ENCODE measurements at regions of chr12 and their contacts with region 1.

Region 1: DNA sequence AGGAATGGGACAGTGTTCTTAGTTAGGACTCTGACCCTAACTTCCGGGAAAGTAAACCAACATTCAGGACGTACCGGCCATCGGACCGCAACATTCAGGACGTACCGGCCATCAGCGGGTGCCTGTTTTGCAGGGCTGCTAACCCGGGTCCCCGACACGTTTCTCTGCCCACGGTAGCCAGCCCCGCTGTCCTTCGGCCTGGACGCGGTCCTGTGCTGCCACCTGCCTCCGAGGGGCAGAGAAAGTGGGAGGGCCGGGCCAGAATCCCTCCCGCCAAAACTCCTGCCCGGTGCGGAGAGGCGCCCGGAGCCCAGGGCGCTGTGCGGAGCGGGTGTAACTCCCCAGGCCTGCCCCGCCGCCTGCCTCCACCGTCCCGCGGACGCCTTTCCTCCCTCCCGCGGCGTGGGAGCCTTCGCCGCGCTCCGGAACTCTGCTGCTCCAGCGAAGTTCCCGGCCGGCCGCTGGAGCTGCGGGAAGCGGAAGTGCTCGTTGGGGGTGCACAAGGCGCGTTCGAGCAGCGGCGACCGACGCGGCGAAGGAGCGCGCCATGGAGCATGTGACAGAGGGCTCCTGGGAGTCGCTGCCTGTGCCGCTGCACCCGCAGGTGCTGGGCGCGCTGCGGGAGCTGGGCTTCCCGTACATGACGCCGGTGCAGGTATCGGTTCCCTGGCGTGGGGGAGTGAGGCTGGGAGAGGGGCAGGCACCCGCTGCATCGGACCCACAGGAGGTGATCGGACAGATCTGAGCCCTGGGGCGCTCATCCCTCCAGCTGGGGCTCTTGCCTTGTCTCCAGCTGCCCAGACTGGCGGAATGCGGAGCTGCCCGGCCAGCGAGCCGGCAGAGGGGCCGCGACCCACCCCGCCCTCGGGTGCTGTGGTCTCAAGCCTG is at the start of gene DDX55:
- DNase-seq: peak; percentile 83
- H3K4me3 Mint-ChIP-seq: peak within 1 kb of the TSS; percentile 87
- H3K27ac Mint-ChIP-seq: peak within 1 kb of the TSS; percentile 90
- H3K4me1 Mint-ChIP-seq: peaks cover 36% of the 10 kb centered on the region
- H3K27me3 Mint-ChIP-seq: no peaks in the 10 kb centered on the region
- total RNA-seq, gene DDX55: 72.1 and 72.3 TPM in 2 replicates

Region 2: DNA sequence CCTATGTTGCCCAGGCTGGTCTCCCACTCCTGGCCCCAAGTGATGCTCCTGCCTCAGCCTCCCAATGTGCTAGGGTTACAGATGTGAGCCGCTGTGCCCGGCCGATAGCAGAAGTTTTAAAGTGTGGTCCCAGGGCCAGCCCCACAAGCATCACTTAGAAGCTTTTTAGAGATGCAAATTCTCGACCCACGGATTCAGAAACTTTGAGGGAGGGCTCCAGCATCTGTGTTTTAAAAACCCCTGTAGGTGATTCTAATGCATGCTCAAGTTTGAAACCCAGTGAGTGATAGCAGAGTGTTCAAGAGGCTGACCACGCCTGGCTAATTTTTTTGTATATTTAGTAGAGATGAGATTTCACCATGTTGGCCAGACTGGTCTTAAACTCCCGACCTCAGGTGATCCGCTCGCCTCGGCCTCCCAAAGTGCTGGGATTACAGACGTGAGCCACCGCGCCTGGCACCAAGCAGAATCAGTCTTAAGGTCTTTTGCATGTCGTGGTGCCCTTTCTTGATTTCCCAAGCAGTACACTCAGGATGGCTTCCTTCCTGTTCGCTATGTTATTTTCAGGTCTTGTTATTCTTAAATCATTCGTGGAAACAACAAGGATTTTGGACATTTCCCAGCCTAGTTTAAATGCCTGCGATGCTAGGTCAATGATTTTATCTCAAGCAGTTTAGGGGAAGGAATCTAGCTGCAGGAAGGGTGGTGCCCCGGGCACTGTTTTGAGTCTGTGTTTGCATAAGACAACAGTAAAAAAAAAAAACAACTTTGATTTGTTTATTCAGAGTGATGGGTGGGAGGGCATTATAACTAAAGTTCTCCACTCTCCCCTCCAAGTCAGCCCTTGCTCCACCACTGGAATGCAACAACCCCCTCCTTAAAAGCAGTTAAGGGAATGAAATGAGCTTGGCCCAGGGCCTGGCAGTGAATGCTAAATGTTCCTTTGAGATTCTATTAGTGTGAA is 156.2 kb before region 1 on chr12:
- intact Hi-C with region 1: no loop called
- DNase-seq: no peak
- H3K4me3 Mint-ChIP-seq: peak overlapping the region; percentile 27
- H3K27ac Mint-ChIP-seq: peak overlapping the region; percentile 57
- H3K4me1 Mint-ChIP-seq: peaks cover 25% of the 10 kb centered on the region
- H3K27me3 Mint-ChIP-seq: no peaks in the 10 kb centered on the region

Region 3: GRCh38 chr12:123614531-123614930 is 12.7 kb after region 1 on chr12:
- intact Hi-C with region 1: loop called (anchors 2 kb)
- DNase-seq: no peak
- H3K4me3 Mint-ChIP-seq: no peak overlapping the region
- H3K27ac Mint-ChIP-seq: no peak overlapping the region
- H3K4me1 Mint-ChIP-seq: peaks cover 11% of the 10 kb centered on the region
- H3K27me3 Mint-ChIP-seq: no peaks in the 10 kb centered on the region

Region 4: GRCh38 chr12:123655420-123655819 is 53.6 kb after region 1 on chr12:
- intact Hi-C with region 1: no loop called
- DNase-seq: no peak
- H3K4me3 Mint-ChIP-seq: no peak overlapping the region
- H3K27ac Mint-ChIP-seq: no peak overlapping the region
- H3K4me1 Mint-ChIP-seq: peaks cover 13% of the 10 kb centered on the region
- H3K27me3 Mint-ChIP-seq: no peaks in the 10 kb centered on the region

Region 5: GRCh38 chr12:123744836-123745235 is 143.0 kb after region 1 on chr12:
- intact Hi-C with region 1: no loop called
- DNase-seq: no peak
- H3K4me3 Mint-ChIP-seq: no peak overlapping the region
- H3K27ac Mint-ChIP-seq: peak overlapping the region; percentile 25
- H3K4me1 Mint-ChIP-seq: peaks cover 15% of the 10 kb centered on the region
- H3K27me3 Mint-ChIP-seq: no peaks in the 10 kb centered on the region